ENCODE measurements at regions of chr19 and their contacts with region 1.

Region 1: DNA sequence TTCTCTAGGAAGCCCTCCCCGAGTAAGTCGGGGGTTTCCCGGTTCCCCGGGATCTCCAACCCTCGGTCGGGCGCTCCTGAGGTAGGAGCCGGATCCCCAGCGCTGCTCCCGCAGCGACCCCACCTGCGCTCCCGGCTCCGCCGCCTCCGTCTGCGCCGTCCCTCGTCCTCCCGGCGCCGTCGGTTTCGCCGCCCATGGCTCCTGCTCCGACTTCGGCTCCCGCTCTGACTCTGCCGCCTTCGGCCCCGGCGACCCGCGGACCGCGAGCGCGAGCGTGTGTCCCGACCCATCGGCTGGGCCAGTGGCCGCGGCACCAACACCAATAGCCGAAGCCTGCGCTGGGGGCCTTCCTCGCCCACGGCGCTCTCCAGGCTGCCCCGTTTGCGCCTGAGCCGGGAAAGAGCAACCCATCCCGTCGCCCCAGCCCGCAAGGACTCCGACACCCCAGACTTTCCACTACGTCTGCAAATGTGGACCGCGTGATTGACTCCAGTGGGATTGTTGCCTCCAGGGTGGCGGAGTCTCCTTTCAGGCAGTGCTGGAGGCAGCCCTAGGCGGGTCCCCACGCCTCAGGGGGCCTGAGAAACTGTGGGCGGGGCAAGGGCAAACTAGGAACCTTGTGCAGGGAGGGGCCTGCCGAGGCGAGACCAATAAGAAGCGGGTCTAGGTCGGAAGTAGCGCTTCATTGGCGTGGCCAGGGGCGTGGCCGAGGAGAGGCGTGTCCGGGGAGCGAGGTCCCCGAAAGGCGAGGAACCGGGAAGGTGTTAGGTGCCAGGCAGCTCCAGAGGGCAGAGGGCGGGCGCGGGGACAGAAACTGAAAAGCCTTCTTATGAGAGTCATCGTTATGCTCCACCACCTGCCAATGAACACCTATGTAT is at the start of gene CACTIN:
- DNase-seq: peak; percentile 97 to 99 (median 99)
- ATAC-seq: peak; percentile 99
- H3K4me3 ChIP-seq: peak within 1 kb of the TSS; percentile 77 to 80
- H3K4me3 Mint-ChIP-seq: peak within 1 kb of the TSS; percentile 85
- H3K27ac ChIP-seq: peak within 1 kb of the TSS; percentile 74 to 99
- H3K27ac Mint-ChIP-seq: peak within 1 kb of the TSS; percentile 99
- H3K4me1 ChIP-seq: peaks cover 20% of the 10 kb centered on the region
- H3K4me1 Mint-ChIP-seq: peaks cover 26% of the 10 kb centered on the region
- H3K27me3 ChIP-seq: no peaks in the 10 kb centered on the region
- H3K27me3 Mint-ChIP-seq: no peaks in the 10 kb centered on the region
- CTCF ChIP-seq: no peak
- total RNA-seq, gene CACTIN: 32.5 to 33.0 TPM

Region 2: DNA sequence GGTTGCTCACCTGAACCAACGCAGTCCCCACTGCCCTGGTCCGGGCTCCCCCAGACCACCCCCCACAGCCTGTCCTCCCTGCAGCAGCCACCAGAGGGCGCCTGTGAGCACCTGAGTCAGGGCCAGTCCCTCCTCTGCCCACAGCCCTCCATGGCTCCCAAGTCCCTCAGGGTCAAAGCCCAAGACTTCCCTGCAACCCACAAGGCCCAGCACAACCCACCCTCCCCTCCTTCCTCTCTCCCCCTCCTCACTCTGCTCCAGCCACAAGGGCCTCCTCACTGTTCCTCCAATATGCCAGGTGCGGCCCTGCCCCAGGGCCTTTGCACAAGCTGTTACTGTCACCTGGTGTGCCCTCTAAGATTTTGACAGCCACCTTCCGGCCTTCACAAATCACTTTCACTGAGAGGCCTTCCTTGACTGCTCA is 480.0 kb before region 1 on chr19:
- CTCF ChIA-PET with region 1: no interaction called
- POLR2A ChIA-PET with region 1: no interaction called
- intact Hi-C with region 1: no loop called
- DNase-seq: peak; percentile 45 to 85 (median 68)
- ATAC-seq: peak; percentile 77
- H3K4me3 ChIP-seq: no peak overlapping the region
- H3K4me3 Mint-ChIP-seq: no peak overlapping the region
- H3K27ac ChIP-seq: no peak overlapping the region
- H3K27ac Mint-ChIP-seq: no peak overlapping the region
- H3K4me1 ChIP-seq: no peaks in the 10 kb centered on the region
- H3K4me1 Mint-ChIP-seq: peaks cover 6% of the 10 kb centered on the region
- H3K27me3 ChIP-seq: no peaks in the 10 kb centered on the region
- H3K27me3 Mint-ChIP-seq: no peaks in the 10 kb centered on the region
- CTCF ChIP-seq: peak; percentile 81

Region 3: GRCh38 chr19:3505598-3506383 is 120.9 kb before region 1 on chr19 and contains the start of gene FZR1:
- CTCF ChIA-PET with region 1: no interaction called
- POLR2A ChIA-PET with region 1: no interaction called
- intact Hi-C with region 1: loop called (anchors 1 kb)
- DNase-seq: peak; percentile 99 to 100 (median 100)
- ATAC-seq: peak; percentile 85
- H3K4me3 ChIP-seq: peak within 1 kb of the TSS; percentile 76 to 83
- H3K4me3 Mint-ChIP-seq: peak within 1 kb of the TSS; percentile 85
- H3K27ac ChIP-seq: peak within 1 kb of the TSS; percentile 97
- H3K27ac Mint-ChIP-seq: peak within 1 kb of the TSS; percentile 97
- H3K4me1 ChIP-seq: peaks cover 36% of the 10 kb centered on the region
- H3K4me1 Mint-ChIP-seq: peaks cover 48% of the 10 kb centered on the region
- H3K27me3 ChIP-seq: no peaks in the 10 kb centered on the region
- H3K27me3 Mint-ChIP-seq: no peaks in the 10 kb centered on the region
- CTCF ChIP-seq: no peak
- total RNA-seq, gene FZR1: 130 to 142 TPM

Region 4: GRCh38 chr19:3572132-3572854 is 54.4 kb before region 1 on chr19:
- CTCF ChIA-PET with region 1: interaction called, 3 read pairs
- POLR2A ChIA-PET with region 1: no interaction called
- intact Hi-C with region 1: loop called (anchors 1 kb)
- DNase-seq: peak; percentile 98 to 100 (median 99)
- ATAC-seq: peak; percentile 95
- H3K4me3 ChIP-seq: peak overlapping the region; percentile 66 to 68
- H3K4me3 Mint-ChIP-seq: peak overlapping the region; percentile 77
- H3K27ac ChIP-seq: peak overlapping the region; percentile 60 to 65
- H3K27ac Mint-ChIP-seq: no peak overlapping the region
- H3K4me1 ChIP-seq: peaks cover 15% of the 10 kb centered on the region
- H3K4me1 Mint-ChIP-seq: peaks cover 18% of the 10 kb centered on the region
- H3K27me3 ChIP-seq: no peaks in the 10 kb centered on the region
- H3K27me3 Mint-ChIP-seq: no peaks in the 10 kb centered on the region
- CTCF ChIP-seq: no peak

Region 5: DNA sequence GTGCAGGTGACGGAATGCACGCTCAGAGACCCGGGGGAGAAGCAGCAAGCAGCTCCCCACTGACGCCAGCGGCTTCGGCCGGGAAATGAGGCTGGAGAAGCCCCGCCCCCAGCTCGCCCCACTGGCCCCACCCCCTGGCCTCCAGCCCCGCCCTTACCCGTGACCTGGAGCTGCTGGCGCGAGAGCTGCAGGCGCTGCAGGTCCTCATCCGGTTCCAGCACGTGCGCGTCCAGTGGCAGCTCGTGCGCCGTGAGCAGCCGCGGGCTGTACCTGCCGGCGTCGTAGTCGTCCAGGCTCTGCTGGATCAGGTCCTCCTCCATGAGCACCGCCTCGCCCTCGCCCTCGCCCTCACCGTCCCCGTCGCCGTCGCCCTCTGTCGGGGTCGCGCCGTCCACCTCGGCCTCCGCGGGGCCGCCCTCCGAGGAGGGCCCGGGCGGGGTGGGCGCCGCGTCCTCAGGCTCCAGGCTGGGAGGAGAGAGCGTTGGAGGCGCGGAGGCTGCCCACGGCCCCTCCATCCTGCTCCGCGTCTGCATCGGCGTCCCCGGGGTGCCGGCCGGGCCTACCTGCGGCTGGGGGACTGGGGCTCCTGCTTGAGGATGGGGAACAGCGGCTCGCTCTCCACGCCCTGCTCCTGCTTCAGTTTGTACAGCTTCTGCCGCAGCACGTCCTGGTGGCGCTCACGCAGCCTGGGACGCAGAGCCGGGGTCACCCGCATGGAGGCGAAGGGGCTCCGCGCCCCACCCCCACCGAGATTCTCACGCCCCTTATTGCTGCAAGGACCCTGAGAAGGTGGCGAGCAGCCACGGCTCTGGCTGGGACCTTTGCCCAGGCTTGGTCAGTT is 13.6 kb before region 1 on chr19:
- CTCF ChIA-PET with region 1: no interaction called
- POLR2A ChIA-PET with region 1: no interaction called
- intact Hi-C with region 1: no loop called
- DNase-seq: no peak
- ATAC-seq: no peak
- H3K4me3 ChIP-seq: no peak overlapping the region
- H3K4me3 Mint-ChIP-seq: no peak overlapping the region
- H3K27ac ChIP-seq: no peak overlapping the region
- H3K27ac Mint-ChIP-seq: no peak overlapping the region
- H3K4me1 ChIP-seq: peaks cover 18% of the 10 kb centered on the region
- H3K4me1 Mint-ChIP-seq: peaks cover 12% of the 10 kb centered on the region
- H3K27me3 ChIP-seq: no peaks in the 10 kb centered on the region
- H3K27me3 Mint-ChIP-seq: no peaks in the 10 kb centered on the region
- CTCF ChIP-seq: no peak

Region 6: DNA sequence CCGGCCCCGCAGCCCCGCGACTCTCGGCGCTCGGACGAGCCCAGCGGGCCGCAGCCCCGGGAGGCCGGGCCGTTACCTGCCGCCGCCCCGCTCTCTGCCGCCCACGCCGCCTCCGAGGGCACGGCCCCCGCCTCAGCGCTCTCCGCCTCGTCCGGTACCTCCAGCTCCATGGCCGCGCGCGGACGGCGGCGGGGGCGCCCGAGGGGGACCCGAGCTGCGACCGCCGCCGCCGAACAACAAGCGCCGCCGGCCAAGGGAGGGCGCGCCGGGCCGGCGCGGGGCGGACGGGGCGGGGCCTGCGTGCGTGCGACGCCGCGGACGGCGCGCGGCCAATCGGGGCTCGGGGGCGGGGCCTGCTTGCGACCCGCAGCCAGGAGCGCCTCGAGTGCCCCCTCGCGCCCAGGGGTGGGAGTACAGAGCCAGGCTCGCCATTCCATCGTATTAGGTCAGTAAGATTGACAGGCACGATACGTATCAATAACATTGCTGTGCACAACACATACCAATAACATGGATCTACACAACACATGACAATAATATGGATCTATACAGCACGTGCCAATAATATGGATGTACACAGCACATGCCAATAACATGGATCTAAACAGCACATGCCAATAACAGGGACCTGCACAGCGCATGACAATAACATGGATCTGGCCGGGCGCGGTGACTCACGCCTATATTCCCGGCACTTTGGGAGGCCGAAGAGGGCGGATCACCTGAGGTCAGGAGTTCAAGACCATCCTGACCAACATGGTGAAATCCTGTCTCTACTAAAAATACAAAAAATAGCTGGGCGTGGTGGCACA is 73.7 kb after region 1 on chr19 and contains the start of gene PIP5K1C:
- CTCF ChIA-PET with region 1: interaction called, 3 read pairs
- POLR2A ChIA-PET with region 1: interaction called, 4 read pairs
- intact Hi-C with region 1: loop called (anchors 1 to 2 kb)
- DNase-seq: peak; percentile 84 to 97 (median 92)
- ATAC-seq: peak; percentile 100
- H3K4me3 ChIP-seq: peak within 1 kb of the TSS; percentile 61 to 63
- H3K4me3 Mint-ChIP-seq: peak within 1 kb of the TSS; percentile 88
- H3K27ac ChIP-seq: no peak within 1 kb of the TSS
- H3K27ac Mint-ChIP-seq: peak within 1 kb of the TSS; percentile 81
- H3K4me1 ChIP-seq: peaks cover 19% of the 10 kb centered on the region
- H3K4me1 Mint-ChIP-seq: peaks cover 29% of the 10 kb centered on the region
- H3K27me3 ChIP-seq: no peaks in the 10 kb centered on the region
- H3K27me3 Mint-ChIP-seq: peaks cover 1% of the 10 kb centered on the region
- CTCF ChIP-seq: peak; percentile 82
- total RNA-seq, gene PIP5K1C: 11.4 to 12.2 TPM

Region 7: DNA sequence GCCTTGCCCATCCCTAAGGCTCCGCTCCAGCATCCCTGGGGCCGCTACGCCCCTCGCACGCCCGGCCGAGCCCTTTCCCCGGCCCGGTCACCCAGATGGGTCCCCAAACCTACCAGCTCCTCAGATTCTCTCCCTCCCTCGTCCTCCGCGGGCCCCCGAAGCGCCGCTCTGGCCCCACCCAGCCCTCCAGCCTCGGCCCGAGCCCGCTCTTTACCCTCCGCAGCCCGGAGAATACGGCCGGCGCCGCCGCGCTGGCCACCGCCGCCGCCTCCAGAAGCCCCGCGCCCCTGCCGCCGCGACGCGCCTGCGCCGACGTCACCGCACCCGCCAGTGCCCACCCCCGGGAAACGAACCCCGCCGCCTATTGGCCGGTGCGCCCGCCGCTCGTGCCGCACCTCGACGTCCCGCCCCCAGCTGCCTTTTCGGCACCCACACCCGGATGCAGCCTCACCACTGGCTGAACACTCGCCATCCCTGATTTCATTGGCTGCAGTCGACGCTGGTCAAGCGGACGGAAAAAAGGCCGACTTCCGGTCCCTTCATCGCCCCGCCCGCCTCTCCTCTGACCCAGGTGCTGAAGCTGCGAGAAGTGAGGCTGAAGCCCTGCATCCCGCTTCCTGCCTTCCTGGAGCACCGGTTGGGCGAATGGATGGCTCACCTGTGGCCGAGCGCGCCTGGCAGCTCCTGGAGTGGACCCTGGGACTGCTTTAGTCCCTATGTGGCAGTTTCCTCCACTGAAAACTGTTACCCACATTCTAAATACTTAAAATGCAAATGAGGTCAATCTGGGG is 344.3 kb after region 1 on chr19 and contains the start of gene DAPK3:
- CTCF ChIA-PET with region 1: no interaction called
- POLR2A ChIA-PET with region 1: interaction called, 3 read pairs
- intact Hi-C with region 1: loop called in 1 of 2 experiments (anchors 2 kb)
- DNase-seq: peak; percentile 70 to 93 (median 90)
- ATAC-seq: peak; percentile 91
- H3K4me3 ChIP-seq: peak within 1 kb of the TSS; percentile 92 to 93
- H3K4me3 Mint-ChIP-seq: peak within 1 kb of the TSS; percentile 83
- H3K27ac ChIP-seq: peak within 1 kb of the TSS; percentile 74 to 84
- H3K27ac Mint-ChIP-seq: peak within 1 kb of the TSS; percentile 78
- H3K4me1 ChIP-seq: peaks cover 20% of the 10 kb centered on the region
- H3K4me1 Mint-ChIP-seq: peaks cover 36% of the 10 kb centered on the region
- H3K27me3 ChIP-seq: no peaks in the 10 kb centered on the region
- H3K27me3 Mint-ChIP-seq: no peaks in the 10 kb centered on the region
- CTCF ChIP-seq: no peak
- total RNA-seq, gene DAPK3: 20.7 to 21.5 TPM

Region 8: DNA sequence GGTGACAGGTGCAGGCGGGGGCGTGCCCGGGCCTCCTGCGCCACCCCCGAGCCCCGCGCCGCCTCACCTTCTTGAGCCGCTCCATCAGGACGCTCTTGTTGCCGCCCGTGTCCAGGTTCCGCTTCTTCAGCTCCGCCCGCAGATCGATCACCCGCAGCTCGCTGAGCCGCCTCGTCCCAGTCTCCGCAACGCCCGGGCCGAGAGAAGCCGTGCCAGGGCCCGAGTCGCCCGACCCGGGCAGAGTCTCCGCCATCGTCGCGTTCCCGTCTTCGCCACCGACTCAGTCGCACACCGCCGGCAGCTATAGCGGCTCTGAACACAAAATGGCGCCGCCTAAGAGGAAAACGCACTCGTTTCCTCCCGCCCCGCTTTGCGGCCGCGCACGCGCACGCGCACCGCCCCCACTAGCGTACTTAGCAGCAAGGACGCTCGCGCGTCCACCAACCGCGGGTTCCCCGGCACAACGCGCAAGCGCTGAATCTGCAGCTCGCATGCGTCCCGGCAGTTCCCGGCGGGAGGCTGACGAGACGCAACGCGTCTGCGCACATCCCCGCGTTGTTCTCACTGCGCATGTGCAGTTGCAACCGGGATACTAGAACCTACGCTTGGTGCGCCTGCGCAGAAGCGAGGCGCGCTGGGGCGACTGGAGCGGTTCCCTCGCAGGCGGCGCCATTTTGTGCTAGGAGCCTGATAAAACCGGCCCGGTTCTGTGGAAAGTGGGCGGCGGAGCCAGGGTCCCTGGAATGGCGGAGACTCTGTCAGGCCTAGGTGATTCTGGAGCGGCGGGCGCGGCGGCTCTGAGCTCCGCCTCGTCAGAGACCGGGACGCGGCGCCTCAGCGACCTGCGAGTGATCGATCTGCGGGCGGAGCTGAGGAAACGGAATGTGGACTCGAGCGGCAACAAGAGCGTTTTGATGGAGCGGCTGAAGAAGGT is 1996.0 kb after region 1 on chr19 and contains the starts of genes SAFB and SAFB2:
- CTCF ChIA-PET with region 1: no interaction called
- POLR2A ChIA-PET with region 1: no interaction called
- intact Hi-C with region 1: loop called in 1 of 2 experiments (anchors 5 kb)
- DNase-seq: peak; percentile 99 to 100 (median 99)
- ATAC-seq: peak; percentile 87
- H3K4me3 ChIP-seq: peak within 1 kb of the TSS; percentile 91 to 93
- H3K4me3 Mint-ChIP-seq: peak within 1 kb of the TSS; percentile 100
- H3K27ac ChIP-seq: peak within 1 kb of the TSS; percentile 90 to 94
- H3K27ac Mint-ChIP-seq: peak within 1 kb of the TSS; percentile 99
- H3K4me1 ChIP-seq: peaks cover 77% of the 10 kb centered on the region
- H3K4me1 Mint-ChIP-seq: peaks cover 69% of the 10 kb centered on the region
- H3K27me3 ChIP-seq: no peaks in the 10 kb centered on the region
- H3K27me3 Mint-ChIP-seq: no peaks in the 10 kb centered on the region
- CTCF ChIP-seq: no peak
- total RNA-seq, gene SAFB: 190 to 191 TPM
- total RNA-seq, gene SAFB2: 293 to 302 TPM